B cell (primary cell): ENCODE measurements at regions of chr6 and their contacts with region 1.

Region 1: DNA sequence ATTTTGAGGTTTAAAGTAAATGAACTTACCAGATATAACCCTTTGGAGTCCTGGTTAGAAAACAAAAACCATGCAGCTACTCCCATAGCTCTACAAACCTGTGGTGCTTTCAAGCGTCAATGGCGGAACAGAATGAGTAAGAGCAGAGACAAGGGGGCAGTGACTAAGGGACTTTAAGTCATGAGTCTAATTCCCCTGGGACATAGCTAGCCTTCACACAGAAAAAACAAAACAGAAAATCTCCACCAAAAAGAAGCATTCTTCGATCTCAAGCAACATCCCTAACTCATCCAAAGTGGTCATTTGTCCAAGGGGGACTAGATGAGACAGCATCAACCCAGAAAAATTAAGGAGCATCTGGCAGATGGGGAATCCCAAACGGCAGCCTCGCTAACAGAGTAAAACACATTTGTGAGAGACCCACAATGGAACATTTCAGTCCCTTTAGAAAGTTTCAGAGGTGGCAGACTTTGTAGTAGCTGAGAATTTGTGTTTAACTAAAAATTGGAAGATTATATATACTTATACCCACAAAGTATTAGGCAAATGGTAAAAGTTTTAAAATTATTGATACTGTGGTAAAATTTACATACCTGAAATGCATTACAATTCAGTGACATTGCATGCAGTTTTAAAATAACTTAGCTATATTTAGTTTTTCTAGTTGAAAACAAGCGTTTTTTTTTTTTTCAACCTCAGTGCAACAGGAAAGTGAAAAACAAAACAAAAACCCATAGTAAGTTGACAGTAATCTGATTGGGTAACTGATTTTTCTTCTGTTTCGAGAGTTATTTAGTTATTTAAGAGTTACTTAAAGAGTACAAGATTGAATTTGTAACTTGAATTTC is 67.5 kb downstream of the KCNQ5 start:
- DNase-seq: peak; percentile 59
- ATAC-seq: peak; percentile 96
- H3K4me3 ChIP-seq: peak overlapping the region in 3 of 5 experiments; percentile 5 to 32 (median 20)
- H3K4me3 Mint-ChIP-seq: peak overlapping the region; percentile 83
- H3K27ac ChIP-seq: peak overlapping the region; percentile 38 to 53
- H3K27ac Mint-ChIP-seq: peak overlapping the region; percentile 87
- H3K4me1 ChIP-seq: peaks cover 6 to 8% of the 10 kb centered on the region in 2 donors
- H3K4me1 Mint-ChIP-seq: peaks cover 15% of the 10 kb centered on the region
- H3K27me3 ChIP-seq: no peaks in the 10 kb centered on the region
- H3K27me3 Mint-ChIP-seq: no peaks in the 10 kb centered on the region
- CTCF ChIP-seq: no peak

Region 2: DNA sequence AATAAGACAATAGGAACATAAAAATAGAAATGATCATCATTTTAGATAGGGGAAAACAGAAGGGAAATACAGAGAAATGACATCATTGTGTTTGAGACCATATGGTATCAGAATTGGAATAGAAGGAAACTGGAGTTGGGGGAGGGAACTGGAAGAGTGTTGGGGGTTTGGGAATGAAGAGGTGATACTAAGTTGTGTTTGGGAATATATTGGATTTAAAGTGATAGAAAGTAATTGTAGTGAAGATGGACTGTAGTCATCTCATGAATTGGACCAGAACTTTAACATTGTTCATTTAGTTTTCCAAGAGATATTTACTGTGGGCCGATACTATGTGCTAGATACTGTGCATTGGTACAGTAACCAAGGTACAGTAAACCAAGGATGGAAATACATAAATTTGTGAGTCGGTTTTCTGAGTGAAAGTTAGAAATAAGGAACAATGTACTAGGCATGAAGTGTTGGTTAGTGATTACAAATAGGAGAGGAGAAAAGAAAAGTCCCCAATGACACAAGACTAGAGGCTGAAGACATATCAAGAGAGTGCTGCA is 35.2 kb before region 1 on chr6:
- CTCF ChIA-PET with region 1: no interaction called
- POLR2A ChIA-PET with region 1: no interaction called
- intact Hi-C with region 1: loop called (anchors 5 kb)
- DNase-seq: peak; percentile 22
- ATAC-seq: peak; percentile 39
- H3K4me3 ChIP-seq: no peak overlapping the region
- H3K4me3 Mint-ChIP-seq: no peak overlapping the region
- H3K27ac ChIP-seq: no peak overlapping the region
- H3K27ac Mint-ChIP-seq: no peak overlapping the region
- H3K4me1 ChIP-seq: peaks cover 6 to 21% of the 10 kb centered on the region in 2 donors
- H3K4me1 Mint-ChIP-seq: peaks cover 34% of the 10 kb centered on the region
- H3K27me3 ChIP-seq: no peaks in the 10 kb centered on the region
- H3K27me3 Mint-ChIP-seq: no peaks in the 10 kb centered on the region
- CTCF ChIP-seq: no peak

Region 3: DNA sequence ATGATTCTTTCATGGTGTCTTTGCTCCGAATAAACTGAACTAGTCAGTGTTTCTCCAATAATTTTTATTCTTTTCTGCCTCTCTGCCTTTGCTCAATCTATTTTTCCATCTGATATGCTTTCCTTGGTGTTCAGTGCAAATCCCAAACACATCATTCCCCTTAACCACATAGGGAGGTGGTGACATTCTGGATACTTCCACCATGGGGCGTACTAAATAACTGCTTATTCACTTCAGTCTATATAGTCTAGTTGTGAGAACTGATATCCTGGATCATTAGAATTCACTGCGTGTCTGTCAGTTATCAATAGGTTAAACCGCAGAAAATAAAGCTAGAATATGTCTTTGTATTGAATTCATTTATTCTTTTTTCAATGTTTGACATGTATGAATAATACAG is 15.6 kb after region 1 on chr6:
- CTCF ChIA-PET with region 1: no interaction called
- POLR2A ChIA-PET with region 1: no interaction called
- intact Hi-C with region 1: no loop called
- DNase-seq: no peak
- ATAC-seq: no peak
- H3K4me3 ChIP-seq: no peak overlapping the region
- H3K4me3 Mint-ChIP-seq: no peak overlapping the region
- H3K27ac ChIP-seq: no peak overlapping the region
- H3K27ac Mint-ChIP-seq: no peak overlapping the region
- H3K4me1 ChIP-seq: no peaks in the 10 kb centered on the region
- H3K4me1 Mint-ChIP-seq: no peaks in the 10 kb centered on the region
- H3K27me3 ChIP-seq: no peaks in the 10 kb centered on the region
- H3K27me3 Mint-ChIP-seq: no peaks in the 10 kb centered on the region
- CTCF ChIP-seq: no peak

Region 4: GRCh38 chr6:72733045-72733444 is 43.7 kb after region 1 on chr6:
- CTCF ChIA-PET with region 1: no interaction called
- POLR2A ChIA-PET with region 1: no interaction called
- intact Hi-C with region 1: loop called (anchors 5 kb)
- DNase-seq: peak; percentile 43
- ATAC-seq: peak; percentile 54
- H3K4me3 ChIP-seq: peak overlapping the region in 1 of 5 experiments; percentile 27
- H3K4me3 Mint-ChIP-seq: no peak overlapping the region
- H3K27ac ChIP-seq: peak overlapping the region; percentile 17 to 62
- H3K27ac Mint-ChIP-seq: no peak overlapping the region
- H3K4me1 ChIP-seq: peaks cover 19 to 20% of the 10 kb centered on the region in 2 donors
- H3K4me1 Mint-ChIP-seq: no peaks in the 10 kb centered on the region
- H3K27me3 ChIP-seq: no peaks in the 10 kb centered on the region
- H3K27me3 Mint-ChIP-seq: no peaks in the 10 kb centered on the region
- CTCF ChIP-seq: no peak